ENCODE measurements at regions of chr19 and their contacts with region 1.

Region 1: GRCh38 chr19:50804420-50805272 is 14.4 kb downstream of the ACP4 start:
- DNase-seq: peak; percentile 99
- ATAC-seq: peak; percentile 99
- H3K4me3 Mint-ChIP-seq: peak overlapping the region; percentile 96
- H3K27ac Mint-ChIP-seq: peak overlapping the region; percentile 98
- H3K4me1 Mint-ChIP-seq: peaks cover 35% of the 10 kb centered on the region
- H3K27me3 Mint-ChIP-seq: no peaks in the 10 kb centered on the region

Region 2: GRCh38 chr19:50272263-50272897 is 532.3 kb before region 1 on chr19:
- CTCF ChIA-PET with region 1: no interaction called
- POLR2A ChIA-PET with region 1: no interaction called
- intact Hi-C with region 1: no loop called
- DNase-seq: no peak
- ATAC-seq: no peak
- H3K4me3 Mint-ChIP-seq: no peak overlapping the region
- H3K27ac Mint-ChIP-seq: no peak overlapping the region
- H3K4me1 Mint-ChIP-seq: no peaks in the 10 kb centered on the region
- H3K27me3 Mint-ChIP-seq: peaks cover 12% of the 10 kb centered on the region

Region 3: GRCh38 chr19:50329146-50329925 is 475.3 kb before region 1 on chr19 and contains the start of gene KCNC3:
- CTCF ChIA-PET with region 1: no interaction called
- POLR2A ChIA-PET with region 1: no interaction called
- intact Hi-C with region 1: loop called in 1 of 2 experiments (anchors 1 kb)
- DNase-seq: peak; percentile 99
- ATAC-seq: peak; percentile 67
- H3K4me3 Mint-ChIP-seq: peak within 1 kb of the TSS; percentile 75
- H3K27ac Mint-ChIP-seq: peak within 1 kb of the TSS; percentile 86
- H3K4me1 Mint-ChIP-seq: peaks cover 59% of the 10 kb centered on the region
- H3K27me3 Mint-ChIP-seq: peaks cover 33% of the 10 kb centered on the region
- total RNA-seq, gene KCNC3: 9.1 to 9.7 TPM

Region 4: DNA sequence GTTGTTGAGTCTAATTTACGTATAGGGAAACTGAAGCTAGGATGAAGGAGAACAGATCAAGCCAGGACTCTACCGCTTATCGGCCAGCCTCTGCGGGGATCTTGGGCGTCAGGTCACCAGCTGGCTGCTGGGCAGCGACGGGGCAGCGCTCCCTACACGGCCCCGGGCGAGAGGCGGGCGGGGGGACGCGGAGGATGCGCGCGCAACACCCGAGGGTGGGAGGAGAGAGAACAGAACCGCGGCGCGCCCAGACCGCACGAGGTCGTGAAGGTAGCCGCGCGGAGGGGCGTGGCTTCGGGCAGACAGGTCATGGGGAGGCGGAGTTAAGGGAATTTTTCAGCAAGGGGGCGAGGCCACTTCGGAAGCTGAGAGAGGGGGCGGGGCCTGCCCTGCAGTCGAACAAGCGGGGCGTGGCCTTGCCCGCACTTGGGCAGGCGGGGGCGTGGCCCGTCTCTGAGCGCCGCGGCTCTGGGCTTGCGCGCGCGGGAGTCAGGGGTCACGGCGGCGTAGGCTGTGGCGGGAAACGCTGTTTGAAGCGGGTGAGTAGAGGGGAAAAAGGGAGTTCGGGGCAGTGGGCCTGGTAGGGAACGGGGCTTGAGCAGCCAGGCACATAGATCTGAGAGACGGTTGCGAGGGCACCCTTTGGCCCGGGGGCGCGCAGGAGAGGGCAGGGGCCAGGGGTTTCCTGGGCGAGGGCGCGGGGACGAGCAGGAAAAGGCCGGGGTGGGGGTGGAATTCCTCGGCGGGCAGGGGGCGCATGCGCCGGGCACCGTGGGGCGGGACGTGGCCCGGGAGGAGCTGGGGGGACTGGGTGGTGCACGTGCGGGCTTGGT is 420.6 kb before region 1 on chr19 and contains the start of gene POLD1:
- CTCF ChIA-PET with region 1: no interaction called
- POLR2A ChIA-PET with region 1: no interaction called
- intact Hi-C with region 1: loop called in 1 of 2 experiments (anchors 1 kb)
- DNase-seq: peak; percentile 100
- ATAC-seq: peak; percentile 92
- H3K4me3 Mint-ChIP-seq: peak within 1 kb of the TSS; percentile 99
- H3K27ac Mint-ChIP-seq: peak within 1 kb of the TSS; percentile 93
- H3K4me1 Mint-ChIP-seq: peaks cover 27% of the 10 kb centered on the region
- H3K27me3 Mint-ChIP-seq: no peaks in the 10 kb centered on the region
- total RNA-seq, gene POLD1: 220 to 227 TPM

Region 5: GRCh38 chr19:50511068-50511822 is 293.4 kb before region 1 on chr19 and contains the start of gene JOSD2:
- CTCF ChIA-PET with region 1: no interaction called
- POLR2A ChIA-PET with region 1: interaction called, 5 read pairs
- intact Hi-C with region 1: loop called in 1 of 2 experiments (anchors 1 kb)
- DNase-seq: peak; percentile 99
- ATAC-seq: peak; percentile 97
- H3K4me3 Mint-ChIP-seq: peak within 1 kb of the TSS; percentile 84
- H3K27ac Mint-ChIP-seq: peak within 1 kb of the TSS; percentile 92
- H3K4me1 Mint-ChIP-seq: peaks cover 14% of the 10 kb centered on the region
- H3K27me3 Mint-ChIP-seq: peaks cover 5% of the 10 kb centered on the region
- total RNA-seq, gene JOSD2: 17.4 to 28.1 TPM

Region 6: GRCh38 chr19:50817941-50818858 is 13.6 kb after region 1 on chr19:
- CTCF ChIA-PET with region 1: interaction called, 4 read pairs
- POLR2A ChIA-PET with region 1: interaction called, 7 read pairs
- intact Hi-C with region 1: loop called (anchors 1 kb)
- DNase-seq: peak; percentile 82
- ATAC-seq: peak; percentile 59
- H3K4me3 Mint-ChIP-seq: peak overlapping the region; percentile 73
- H3K27ac Mint-ChIP-seq: peak overlapping the region; percentile 83
- H3K4me1 Mint-ChIP-seq: peaks cover 45% of the 10 kb centered on the region
- H3K27me3 Mint-ChIP-seq: peaks cover 61% of the 10 kb centered on the region

Region 7: DNA sequence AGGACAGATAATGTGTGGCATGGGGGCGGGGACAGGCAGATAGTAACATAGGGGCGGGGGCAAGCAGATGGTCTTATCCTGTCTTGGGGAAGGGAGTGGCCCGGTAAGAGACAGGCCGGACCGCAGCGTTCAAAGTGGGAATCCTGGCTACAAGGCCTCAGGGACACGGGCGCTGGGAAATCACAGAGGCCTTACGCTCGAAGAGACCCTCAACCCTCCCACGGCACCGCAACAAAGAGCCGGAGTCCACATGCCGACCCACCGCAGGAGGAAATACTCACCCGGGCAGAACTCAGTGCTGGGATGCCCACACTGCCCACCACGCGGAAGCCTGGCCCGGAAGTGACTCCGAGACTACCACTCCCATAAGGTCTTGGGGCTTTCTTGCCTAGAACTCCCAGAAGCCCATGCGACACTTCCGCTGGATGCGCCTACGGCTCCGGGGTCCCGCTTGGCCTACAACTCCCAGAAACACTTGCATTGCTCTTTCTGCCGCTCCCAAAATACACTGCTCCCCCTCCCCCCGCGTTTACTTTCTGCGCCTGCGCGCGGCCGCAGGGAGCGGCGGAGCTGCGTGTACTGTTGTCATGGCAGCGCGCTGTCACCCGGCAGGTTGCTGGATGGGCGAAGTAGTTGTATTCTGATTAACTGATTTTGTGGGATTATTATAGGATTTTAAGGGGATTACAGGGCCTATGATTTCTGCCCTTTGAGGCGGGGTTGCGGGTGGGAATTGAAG is 303.6 kb after region 1 on chr19 and contains the start of gene CTU1:
- CTCF ChIA-PET with region 1: no interaction called
- POLR2A ChIA-PET with region 1: no interaction called
- intact Hi-C with region 1: loop called in 1 of 2 experiments (anchors 1 kb)
- DNase-seq: peak; percentile 99
- ATAC-seq: peak; percentile 98
- H3K4me3 Mint-ChIP-seq: peak within 1 kb of the TSS; percentile 92
- H3K27ac Mint-ChIP-seq: peak within 1 kb of the TSS; percentile 91
- H3K4me1 Mint-ChIP-seq: peaks cover 36% of the 10 kb centered on the region
- H3K27me3 Mint-ChIP-seq: no peaks in the 10 kb centered on the region
- total RNA-seq, gene CTU1: 7.2 to 9.1 TPM

Region 8: DNA sequence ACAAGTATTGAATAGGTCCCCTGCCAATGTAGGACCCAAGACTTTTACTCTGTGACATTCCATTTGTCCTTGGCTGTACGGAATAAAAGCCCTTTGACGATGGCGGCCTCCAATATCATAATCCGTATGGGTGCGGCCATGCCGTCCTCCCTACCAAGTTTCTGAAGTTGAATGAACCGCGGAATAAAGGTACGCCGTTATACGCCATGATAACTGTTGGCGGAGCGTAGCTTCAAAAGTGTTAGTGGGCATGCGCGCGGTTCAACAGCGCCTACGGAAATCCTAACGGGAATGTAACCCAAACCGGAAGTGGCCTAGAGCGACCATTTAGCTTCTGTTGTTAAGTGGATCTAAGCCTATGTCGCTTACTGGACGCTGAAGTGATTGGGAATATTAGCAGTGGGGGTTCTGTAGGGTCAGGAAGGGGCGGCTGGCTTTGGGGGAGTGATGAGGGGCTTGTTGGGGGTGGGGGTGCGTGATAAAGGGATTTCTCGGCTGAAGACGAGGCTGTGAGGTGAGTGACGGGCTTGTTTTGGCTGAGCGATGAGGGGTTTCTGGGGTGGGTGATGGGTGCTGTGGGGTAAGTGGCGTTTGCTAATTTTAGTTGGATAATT is 766.4 kb after region 1 on chr19 and contains the start of gene ZNF175:
- CTCF ChIA-PET with region 1: no interaction called
- POLR2A ChIA-PET with region 1: no interaction called
- intact Hi-C with region 1: loop called in 1 of 2 experiments (anchors 5 kb)
- DNase-seq: peak; percentile 91
- ATAC-seq: peak; percentile 96
- H3K4me3 Mint-ChIP-seq: peak within 1 kb of the TSS; percentile 91
- H3K27ac Mint-ChIP-seq: peak within 1 kb of the TSS; percentile 89
- H3K4me1 Mint-ChIP-seq: peaks cover 31% of the 10 kb centered on the region
- H3K27me3 Mint-ChIP-seq: peaks cover 2% of the 10 kb centered on the region
- total RNA-seq, gene ZNF175: 5.9 to 9.6 TPM

Measured in activated CD4-positive, alpha-beta T cell treated with anti-CD3 and anti-CD28 coated beads for 36 hours (primary cell).